Activated CD8-positive, alpha-beta T cell treated with anti-CD3 and anti-CD28 coated beads, Interleukin-2, amount 10 ng/mL, durations not matched to agents 7 days and 5 days (primary cell): ENCODE measurements at regions of chr3 and their contacts with region 1.

Region 1: DNA sequence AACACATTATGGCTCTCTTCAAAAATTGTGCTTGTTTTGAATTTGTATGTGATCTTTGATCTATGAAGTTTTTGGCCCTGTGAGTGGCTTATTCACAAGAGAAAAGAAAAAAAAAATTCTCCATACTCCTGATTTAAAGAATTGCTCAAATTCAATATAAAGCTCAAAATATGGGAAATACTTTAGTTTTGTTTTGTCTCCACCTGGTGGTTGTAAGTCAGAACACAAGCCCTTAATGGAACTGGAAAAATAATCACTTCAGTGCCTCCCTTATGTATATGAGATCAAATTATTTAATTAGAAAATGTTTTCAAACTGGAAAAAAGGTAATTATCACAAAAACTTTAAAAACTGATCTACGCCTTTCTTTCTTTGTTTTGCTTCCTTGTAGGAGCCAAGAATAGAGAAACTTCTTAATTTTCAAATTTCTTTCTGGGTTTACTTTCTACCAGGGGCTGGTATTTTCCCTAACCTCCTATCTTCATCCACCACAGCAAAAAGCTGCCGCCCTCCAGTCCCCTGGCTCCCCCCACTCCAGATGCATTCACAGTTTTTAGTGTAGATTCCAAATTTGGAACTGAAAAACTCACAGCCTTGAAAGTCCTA is 50.6 kb downstream of the SERP1 start:
- DNase-seq: no peak
- ATAC-seq: no peak
- H3K4me3 Mint-ChIP-seq: no peak overlapping the region
- H3K27ac Mint-ChIP-seq: no peak overlapping the region
- H3K4me1 Mint-ChIP-seq: no peaks in the 10 kb centered on the region
- H3K27me3 Mint-ChIP-seq: peaks cover 5% of the 10 kb centered on the region

Region 2: DNA sequence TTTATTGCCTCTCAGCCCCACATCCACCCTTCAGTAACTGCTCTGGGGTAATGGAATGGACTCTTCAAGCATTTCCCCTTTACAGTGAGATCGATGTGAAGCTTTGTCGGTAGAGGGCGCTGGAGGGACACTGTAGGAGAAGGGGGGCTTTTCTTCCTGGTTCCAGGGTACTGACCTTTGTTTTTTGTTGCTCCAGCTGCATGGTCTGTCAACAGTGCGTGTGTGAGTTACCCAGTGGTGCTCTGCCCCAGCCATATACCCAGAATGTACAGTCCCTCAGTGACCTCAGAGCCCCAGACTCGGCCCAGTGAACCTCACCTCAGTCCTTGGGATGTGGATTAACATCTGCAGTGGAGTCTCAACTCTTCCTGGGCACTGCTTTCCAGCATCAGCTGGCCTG is 267.8 kb before region 1 on chr3:
- CTCF ChIA-PET with region 1: interaction called, 20 read pairs
- POLR2A ChIA-PET with region 1: no interaction called
- DNase-seq: peak; percentile 61
- ATAC-seq: peak; percentile 63
- H3K4me3 Mint-ChIP-seq: no peak overlapping the region
- H3K27ac Mint-ChIP-seq: no peak overlapping the region
- H3K4me1 Mint-ChIP-seq: no peaks in the 10 kb centered on the region
- H3K27me3 Mint-ChIP-seq: peaks cover 14% of the 10 kb centered on the region

Region 3: GRCh38 chr3:150286390-150287147 is 209.1 kb before region 1 on chr3:
- CTCF ChIA-PET with region 1: interaction called, 21 read pairs
- POLR2A ChIA-PET with region 1: no interaction called
- DNase-seq: no peak
- ATAC-seq: peak; percentile 65
- H3K4me3 Mint-ChIP-seq: no peak overlapping the region
- H3K27ac Mint-ChIP-seq: no peak overlapping the region
- H3K4me1 Mint-ChIP-seq: no peaks in the 10 kb centered on the region
- H3K27me3 Mint-ChIP-seq: peaks cover 41% of the 10 kb centered on the region

Region 4: GRCh38 chr3:150408221-150409102 is 87.2 kb before region 1 on chr3 and contains the start of gene TSC22D2:
- CTCF ChIA-PET with region 1: interaction called, 26 read pairs
- POLR2A ChIA-PET with region 1: no interaction called
- DNase-seq: peak; percentile 93
- ATAC-seq: peak; percentile 69
- H3K4me3 Mint-ChIP-seq: peak within 1 kb of the TSS; percentile 92
- H3K27ac Mint-ChIP-seq: peak within 1 kb of the TSS; percentile 86
- H3K4me1 Mint-ChIP-seq: peaks cover 29% of the 10 kb centered on the region
- H3K27me3 Mint-ChIP-seq: peaks cover 3% of the 10 kb centered on the region
- total RNA-seq, gene TSC22D2: 8.6 to 8.9 TPM

Region 5: DNA sequence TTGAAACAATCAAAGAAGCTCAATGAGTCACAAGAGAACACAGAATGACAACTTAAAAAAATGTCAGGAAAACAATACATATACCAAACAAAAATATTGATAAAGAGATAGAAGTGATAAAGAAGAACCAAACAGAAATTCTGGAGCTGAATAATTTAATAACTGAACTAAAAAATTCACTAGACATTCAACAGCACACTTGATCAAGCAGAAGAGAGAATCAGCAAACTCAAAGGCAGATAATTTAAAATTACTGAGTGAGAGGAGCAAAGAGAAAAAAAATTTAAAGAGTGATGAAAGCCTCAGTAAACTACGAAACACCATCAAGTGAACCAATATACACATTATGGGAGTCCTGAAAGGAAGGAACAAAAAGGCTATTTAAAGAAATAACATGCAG is 11.3 kb before region 1 on chr3:
- CTCF ChIA-PET with region 1: interaction called, 13 read pairs
- POLR2A ChIA-PET with region 1: no interaction called
- DNase-seq: no peak
- ATAC-seq: no peak
- H3K4me3 Mint-ChIP-seq: no peak overlapping the region
- H3K27ac Mint-ChIP-seq: no peak overlapping the region
- H3K4me1 Mint-ChIP-seq: no peaks in the 10 kb centered on the region
- H3K27me3 Mint-ChIP-seq: no peaks in the 10 kb centered on the region